ENCODE measurements at regions of chr14 and their contacts with region 1.

Region 1: DNA sequence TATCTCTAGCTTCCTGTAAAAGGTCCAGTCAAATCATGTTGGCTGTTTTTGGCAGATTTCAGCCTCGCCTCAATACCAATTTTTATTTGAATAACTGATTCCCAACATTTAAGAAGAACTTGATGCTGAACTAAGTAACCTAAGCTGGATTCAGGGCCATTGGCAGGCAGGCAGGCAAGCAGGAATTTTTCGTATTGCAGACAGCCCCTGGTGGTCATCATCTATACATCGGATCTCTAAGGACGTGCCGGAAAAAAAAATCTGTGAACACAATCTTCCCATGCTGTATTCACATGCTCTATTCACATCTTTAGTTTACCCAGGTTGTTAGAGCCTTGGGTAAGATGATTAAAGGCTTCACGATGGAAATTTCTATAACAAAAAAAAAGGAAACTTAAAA is 7.0 kb downstream of the VCPKMT start:
- DNase-seq: no peak
- ATAC-seq: no peak
- H3K4me3 ChIP-seq: no peak overlapping the region
- H3K27ac ChIP-seq: no peak overlapping the region
- H3K4me1 ChIP-seq: peaks cover 0 to 9% (median 0%) of the 10 kb centered on the region in 9 donors
- H3K27me3 ChIP-seq: no peaks in the 10 kb centered on the region
- CTCF ChIP-seq: no peak

Region 2: GRCh38 chr14:49808780-49809179 is 300.6 kb before region 1 on chr14:
- intact Hi-C with region 1: no loop called
- DNase-seq: no peak
- ATAC-seq: no peak
- H3K4me3 ChIP-seq: no peak overlapping the region
- H3K27ac ChIP-seq: no peak overlapping the region
- H3K4me1 ChIP-seq: no peaks in the 10 kb centered on the region
- H3K27me3 ChIP-seq: no peaks in the 10 kb centered on the region
- CTCF ChIP-seq: no peak

Region 3: GRCh38 chr14:49862089-49862673 is 247.2 kb before region 1 on chr14:
- intact Hi-C with region 1: loop called in 8 of 10 experiments (anchors 1 to 10 kb)
- DNase-seq: peak; percentile 72 to 86
- ATAC-seq: peak; percentile 38 to 73 (median 55)
- H3K4me3 ChIP-seq: peak overlapping the region; percentile 48 to 92 (median 64)
- H3K27ac ChIP-seq: peak overlapping the region; percentile 93 to 98 (median 96)
- H3K4me1 ChIP-seq: peaks cover 0 to 43% (median 15%) of the 10 kb centered on the region in 9 donors
- H3K27me3 ChIP-seq: no peaks in the 10 kb centered on the region
- CTCF ChIP-seq: peak in 7 of 9 donors; percentile 100

Region 4: DNA sequence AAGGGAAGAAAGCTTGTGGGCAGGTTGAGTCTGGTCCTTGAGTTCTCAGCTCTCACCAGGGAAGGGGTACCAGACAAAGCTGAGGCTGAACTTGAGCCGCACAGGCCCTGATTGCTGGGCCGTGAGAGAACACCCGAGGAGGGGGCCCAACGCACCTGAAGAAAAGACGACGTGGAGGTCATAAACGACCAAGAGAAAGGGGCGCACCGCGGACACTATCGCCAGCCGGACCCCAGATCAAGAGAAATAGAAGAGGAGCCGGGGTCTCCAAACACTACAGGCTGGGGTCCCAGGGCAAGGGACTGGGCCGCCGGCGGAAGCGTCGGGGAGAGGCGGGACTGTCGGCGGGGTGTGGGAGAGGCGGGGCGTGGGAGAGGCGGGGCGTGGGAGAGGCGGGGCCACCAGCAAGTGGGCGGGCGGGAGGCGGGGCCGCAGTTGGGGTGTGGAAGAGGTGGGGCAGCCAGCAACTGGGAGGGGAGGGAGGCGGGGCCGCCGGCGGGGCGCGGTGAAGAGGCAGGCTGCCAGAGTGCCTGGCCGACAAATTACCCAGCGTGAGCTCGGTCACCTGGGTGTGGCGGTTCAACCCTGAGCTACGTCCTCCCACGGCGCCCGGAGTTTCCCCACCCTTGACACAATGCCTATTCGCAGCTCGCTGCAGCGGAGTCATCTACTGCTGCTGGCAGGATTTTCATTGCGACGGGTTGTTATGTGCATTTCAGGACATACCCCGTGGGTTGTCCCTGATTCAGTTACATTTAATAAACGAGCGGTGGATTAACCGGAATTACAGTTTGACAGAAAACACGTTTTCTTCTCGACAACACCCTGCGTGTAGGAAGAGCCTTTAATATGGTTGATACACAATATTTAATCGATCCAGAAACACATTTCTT is 241.3 kb before region 1 on chr14:
- intact Hi-C with region 1: loop called in 9 of 10 experiments (anchors 1 to 10 kb)
- DNase-seq: peak; percentile 96 to 98
- ATAC-seq: peak; percentile 95 to 98 (median 97)
- H3K4me3 ChIP-seq: peak overlapping the region; percentile 22 to 75 (median 62)
- H3K27ac ChIP-seq: peak overlapping the region; percentile 75 to 97 (median 94)
- H3K4me1 ChIP-seq: peaks cover 0 to 56% (median 21%) of the 10 kb centered on the region in 9 donors
- H3K27me3 ChIP-seq: no peaks in the 10 kb centered on the region
- CTCF ChIP-seq: peak in 1 of 9 donors; percentile 4

Region 5: GRCh38 chr14:49879683-49880204 is 229.6 kb before region 1 on chr14:
- intact Hi-C with region 1: loop called in 5 of 10 experiments (anchors 5 to 10 kb)
- DNase-seq: peak in 1 of 2 donors; percentile 30
- ATAC-seq: peak in 7 of 8 donors; percentile 50 to 81 (median 75)
- H3K4me3 ChIP-seq: no peak overlapping the region
- H3K27ac ChIP-seq: peak overlapping the region in 1 of 10 donors; percentile 37
- H3K4me1 ChIP-seq: peaks cover 0 to 17% (median 0%) of the 10 kb centered on the region in 9 donors
- H3K27me3 ChIP-seq: no peaks in the 10 kb centered on the region
- CTCF ChIP-seq: peak; percentile 21 to 73 (median 65)

Region 6: GRCh38 chr14:49892636-49893308 is 216.6 kb before region 1 on chr14 and contains the start of gene ARF6:
- intact Hi-C with region 1: loop called in 4 of 10 experiments (anchors 5 to 10 kb)
- DNase-seq: peak; percentile 99 to 100
- ATAC-seq: peak; percentile 97 to 100 (median 99)
- H3K4me3 ChIP-seq: peak within 1 kb of the TSS; percentile 82 to 100 (median 94)
- H3K27ac ChIP-seq: peak within 1 kb of the TSS; percentile 98 to 100 (median 100)
- H3K4me1 ChIP-seq: peaks cover 7 to 45% (median 40%) of the 10 kb centered on the region in 9 donors
- H3K27me3 ChIP-seq: no peaks in the 10 kb centered on the region
- CTCF ChIP-seq: peak in 5 of 9 donors; percentile 9 to 45 (median 28)
- total RNA-seq, gene ARF6: 19.0 to 40.5 (median 25.5) TPM

Region 7: DNA sequence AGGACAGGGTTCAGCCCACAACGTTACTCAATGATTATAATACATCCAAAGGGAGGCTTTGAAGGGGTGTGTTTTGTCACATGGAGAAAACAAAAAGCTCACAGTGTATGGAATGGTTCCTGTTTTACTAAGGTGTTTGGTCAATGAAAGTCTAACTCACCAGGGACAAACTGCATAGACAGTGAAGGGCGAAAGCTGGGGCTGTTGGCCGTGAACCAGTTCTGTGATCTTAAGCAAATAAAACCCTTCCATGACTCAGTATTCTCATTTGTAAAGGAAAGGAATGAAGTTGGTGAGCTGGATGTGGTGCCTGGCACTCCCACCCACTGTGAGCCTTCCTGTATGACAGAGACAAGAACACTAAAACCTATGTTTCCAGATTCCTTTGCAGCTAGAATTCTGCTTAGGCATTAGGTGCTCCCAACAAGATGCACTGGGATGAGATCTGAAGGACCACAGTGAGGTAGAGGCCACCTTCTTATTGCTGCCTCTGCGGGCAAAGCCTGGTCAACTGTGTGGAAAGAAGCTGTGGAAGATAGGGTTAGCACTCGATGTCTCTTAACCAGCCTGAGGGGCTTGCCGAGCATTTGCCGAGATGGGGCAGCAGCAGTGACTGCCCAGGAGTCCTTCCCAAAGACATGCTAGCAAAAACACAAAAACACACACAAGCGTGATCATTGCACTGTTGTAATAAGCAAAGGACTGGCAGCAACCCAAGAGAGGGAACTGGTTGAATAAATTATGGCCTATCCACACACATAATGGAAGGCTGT is 41.4 kb before region 1 on chr14:
- intact Hi-C with region 1: no loop called
- DNase-seq: no peak
- ATAC-seq: no peak
- H3K4me3 ChIP-seq: no peak overlapping the region
- H3K27ac ChIP-seq: no peak overlapping the region
- H3K4me1 ChIP-seq: peaks cover 0 to 29% (median 0%) of the 10 kb centered on the region in 9 donors
- H3K27me3 ChIP-seq: no peaks in the 10 kb centered on the region
- CTCF ChIP-seq: no peak